ENCODE measurements at regions of chr5 and their contacts with region 1.

Region 1: DNA sequence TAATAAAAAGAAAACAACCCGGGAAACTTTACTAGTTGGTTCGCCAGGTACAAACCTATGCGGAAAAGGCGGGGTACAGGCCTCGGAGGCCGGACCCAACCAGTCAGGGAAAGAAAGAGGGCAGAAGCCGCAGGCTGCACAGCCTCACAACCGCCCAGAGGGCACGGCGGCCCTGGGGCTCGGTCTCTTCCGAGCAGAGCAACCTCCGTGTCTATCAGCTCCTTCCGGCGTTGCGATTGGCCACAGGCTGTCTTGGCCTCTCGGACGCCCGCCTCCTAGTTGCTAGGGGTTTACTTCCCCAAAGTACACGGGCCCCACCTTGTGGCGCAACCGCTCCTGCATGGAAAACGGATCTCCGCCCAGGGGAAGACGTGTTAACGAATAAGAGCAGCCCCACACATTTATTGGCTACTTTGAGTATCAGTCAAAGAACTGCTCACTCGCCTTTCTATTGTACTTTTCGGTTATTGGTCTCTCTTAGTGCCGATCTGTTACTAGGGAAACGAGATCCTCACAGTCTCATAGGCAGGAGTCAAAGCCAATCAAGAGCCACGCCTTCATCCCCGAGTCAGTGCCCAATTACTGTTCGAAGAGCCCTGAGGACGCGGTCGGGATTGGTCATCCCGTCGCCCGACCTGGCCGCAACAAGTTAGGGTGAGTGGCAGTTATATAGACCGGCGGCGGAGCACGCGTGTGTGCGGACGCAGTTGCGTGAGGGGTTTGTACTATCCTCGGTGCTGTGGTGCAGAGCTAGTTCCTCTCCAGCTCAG is at the start of gene G3BP1:
- DNase-seq: peak; percentile 100
- H3K4me3 ChIP-seq: peak within 1 kb of the TSS; percentile 89 to 92
- H3K27ac ChIP-seq: peak within 1 kb of the TSS; percentile 99
- H3K4me1 ChIP-seq: peaks cover 9 to 30% of the 10 kb centered on the region in 2 donors
- H3K27me3 ChIP-seq: no peaks in the 10 kb centered on the region
- CTCF ChIP-seq: peak; percentile 33 to 55 (median 51)
- total RNA-seq, gene G3BP1: 138 TPM

Region 2: DNA sequence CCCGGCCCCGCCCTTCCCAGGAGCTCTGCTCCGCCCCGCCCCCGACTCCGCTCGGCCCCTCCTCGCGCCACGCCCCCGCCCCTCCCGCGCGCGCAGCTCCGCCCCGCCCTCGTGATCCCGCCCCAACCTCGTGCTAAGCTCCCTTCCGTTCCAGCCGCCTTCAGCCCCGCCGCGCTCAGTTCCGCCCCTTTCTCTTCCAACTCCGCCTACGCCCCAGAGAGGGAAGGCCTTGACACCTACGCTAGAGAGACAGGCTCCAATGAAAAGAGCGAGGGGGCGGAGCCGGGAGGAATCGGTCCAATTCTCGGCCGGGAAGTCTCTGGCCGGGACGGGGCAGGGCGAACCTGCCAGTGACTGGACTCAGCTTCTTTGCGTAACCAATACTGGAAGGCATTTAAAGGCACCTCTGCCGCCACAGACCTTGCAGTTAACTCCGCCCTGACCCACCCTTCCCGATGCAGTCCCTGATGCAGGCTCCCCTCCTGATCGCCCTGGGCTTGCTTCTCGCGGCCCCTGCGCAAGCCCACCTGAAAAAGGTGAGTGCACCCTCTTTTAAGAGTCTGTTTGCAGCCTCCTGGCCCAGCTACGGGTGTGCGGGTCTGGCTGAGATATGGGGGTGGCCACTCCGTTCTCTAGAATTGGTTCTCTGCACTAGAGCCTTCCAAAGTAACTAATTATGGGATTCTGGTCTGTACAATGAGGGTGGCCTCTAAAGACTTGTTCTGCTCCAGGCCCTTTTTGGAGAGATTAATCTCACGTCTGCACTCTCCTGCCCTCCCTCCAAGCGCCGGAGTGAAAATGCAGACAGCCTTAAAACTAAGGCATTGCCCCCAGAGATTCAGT is 518.5 kb before region 1 on chr5 and contains the start of gene GM2A:
- intact Hi-C with region 1: loop called (anchors 2 kb)
- DNase-seq: peak; percentile 98 to 100
- H3K4me3 ChIP-seq: peak within 1 kb of the TSS; percentile 77 to 88
- H3K27ac ChIP-seq: peak within 1 kb of the TSS; percentile 52 to 75
- H3K4me1 ChIP-seq: peaks cover 5 to 11% of the 10 kb centered on the region in 2 donors
- H3K27me3 ChIP-seq: no peaks in the 10 kb centered on the region
- CTCF ChIP-seq: no peak
- total RNA-seq, gene GM2A: 15.0 TPM

Region 3: GRCh38 chr5:151298063-151298855 is 473.2 kb before region 1 on chr5:
- intact Hi-C with region 1: no loop called
- DNase-seq: no peak
- H3K4me3 ChIP-seq: no peak overlapping the region
- H3K27ac ChIP-seq: no peak overlapping the region
- H3K4me1 ChIP-seq: no peaks in the 10 kb centered on the region
- H3K27me3 ChIP-seq: no peaks in the 10 kb centered on the region
- CTCF ChIP-seq: peak in 1 of 3 experiments; percentile 33

Region 4: DNA sequence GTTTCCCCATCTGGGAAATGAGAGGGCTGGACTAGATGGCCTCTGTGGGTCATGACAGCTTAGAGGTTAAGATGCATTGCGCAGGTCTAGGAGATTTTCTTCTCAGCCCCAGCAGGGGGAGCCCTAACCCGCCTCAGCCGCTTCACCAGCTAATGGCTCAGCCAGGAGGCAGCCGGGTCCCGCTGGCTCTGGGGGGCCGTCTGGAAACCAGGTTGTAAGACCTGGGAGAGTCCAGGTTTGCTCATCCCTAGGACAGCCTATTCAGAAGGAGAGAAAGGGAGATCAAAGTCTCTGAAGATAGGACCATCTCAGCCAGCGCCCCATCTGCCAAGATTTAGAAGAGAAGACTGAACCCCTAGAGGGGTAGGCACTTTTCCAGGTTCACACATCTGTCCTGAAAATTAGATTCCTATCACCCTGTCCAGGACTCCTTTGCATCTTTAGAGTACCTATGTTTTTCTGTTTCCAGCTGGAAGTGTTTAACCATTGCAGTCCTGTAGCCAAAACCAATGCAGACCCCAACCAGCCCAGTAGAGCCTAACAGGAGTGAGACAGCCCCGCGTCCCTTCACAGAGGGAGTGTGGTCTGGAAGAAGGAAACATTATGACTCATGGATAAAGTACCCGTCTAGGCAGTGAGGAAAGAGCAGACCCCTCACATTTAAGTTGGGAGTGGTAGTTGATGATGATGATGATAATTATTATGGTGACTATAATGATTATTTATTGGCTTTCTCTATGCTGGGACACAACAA is 112.3 kb before region 1 on chr5:
- intact Hi-C with region 1: loop called (anchors 1 kb)
- DNase-seq: peak; percentile 50 to 87
- H3K4me3 ChIP-seq: no peak overlapping the region
- H3K27ac ChIP-seq: peak overlapping the region; percentile 72 to 93
- H3K4me1 ChIP-seq: peaks cover 5 to 19% of the 10 kb centered on the region in 2 donors
- H3K27me3 ChIP-seq: no peaks in the 10 kb centered on the region
- CTCF ChIP-seq: peak; percentile 87 to 92 (median 90)

Region 5: DNA sequence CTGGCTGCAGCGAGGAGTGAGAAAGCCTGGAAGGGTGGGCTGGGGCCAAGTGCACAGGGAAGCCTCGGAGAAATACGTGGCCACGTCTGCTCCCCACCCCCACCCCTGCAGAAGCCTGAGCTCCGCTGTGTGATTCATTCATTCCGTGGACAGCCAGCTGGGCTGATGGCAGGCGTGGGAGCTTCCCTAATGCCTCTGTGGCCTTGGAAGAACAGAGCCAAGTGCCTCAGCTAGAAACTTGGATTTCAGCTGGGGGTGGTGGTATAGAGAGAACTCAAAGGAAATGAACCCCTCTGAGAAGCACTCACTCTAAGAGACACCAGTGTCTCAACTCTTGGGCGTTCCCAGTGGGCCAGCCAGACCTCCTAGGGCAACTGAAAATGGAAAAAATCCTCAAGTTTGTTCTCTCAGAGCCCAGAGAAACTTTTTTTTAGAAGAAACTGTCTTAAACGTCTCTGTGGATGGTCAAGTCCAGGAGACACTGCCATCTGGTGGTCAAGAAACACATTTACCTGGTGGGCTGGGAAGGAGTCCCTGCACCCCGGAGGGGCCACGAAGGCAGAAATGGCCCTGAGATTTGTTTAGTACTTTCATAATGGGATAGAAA is 31.0 kb before region 1 on chr5:
- intact Hi-C with region 1: loop called (anchors 2 kb)
- DNase-seq: peak in 1 of 2 donors; percentile 87
- H3K4me3 ChIP-seq: peak overlapping the region in 1 of 2 donors; percentile 9
- H3K27ac ChIP-seq: peak overlapping the region; percentile 86 to 89
- H3K4me1 ChIP-seq: peaks cover 4 to 33% of the 10 kb centered on the region in 2 donors
- H3K27me3 ChIP-seq: no peaks in the 10 kb centered on the region
- CTCF ChIP-seq: peak; percentile 82 to 94 (median 92)

Region 6: DNA sequence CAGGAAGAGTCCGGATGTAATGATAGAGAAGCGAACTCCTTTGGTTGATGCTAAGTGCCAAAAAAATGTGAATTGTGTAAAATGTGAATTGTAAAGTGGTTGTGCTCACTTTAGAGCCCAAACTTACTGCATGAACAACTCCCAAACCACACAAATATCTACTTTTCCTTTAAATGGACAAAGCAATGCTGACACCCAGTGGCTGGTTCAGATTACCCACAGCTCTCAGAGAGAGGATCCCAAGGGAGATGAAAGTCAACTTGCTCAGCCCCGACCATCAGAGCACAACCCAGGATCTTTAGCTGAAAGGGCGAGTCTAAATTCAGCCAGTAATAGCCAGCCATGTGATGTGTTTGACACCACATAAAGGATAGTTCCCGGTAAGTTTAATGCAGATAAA is 500.0 kb after region 1 on chr5:
- intact Hi-C with region 1: loop called (anchors 10 kb)
- DNase-seq: no peak
- H3K4me3 ChIP-seq: no peak overlapping the region
- H3K27ac ChIP-seq: no peak overlapping the region
- H3K4me1 ChIP-seq: peaks cover 0 to 14% of the 10 kb centered on the region in 2 donors
- H3K27me3 ChIP-seq: no peaks in the 10 kb centered on the region
- CTCF ChIP-seq: peak; percentile 38 to 63 (median 40)

Measured in ascending aorta (tissue), 2 donors.